GM12878 (cell line): ENCODE measurements at regions of chr3 and their contacts with region 1.

Region 1: DNA sequence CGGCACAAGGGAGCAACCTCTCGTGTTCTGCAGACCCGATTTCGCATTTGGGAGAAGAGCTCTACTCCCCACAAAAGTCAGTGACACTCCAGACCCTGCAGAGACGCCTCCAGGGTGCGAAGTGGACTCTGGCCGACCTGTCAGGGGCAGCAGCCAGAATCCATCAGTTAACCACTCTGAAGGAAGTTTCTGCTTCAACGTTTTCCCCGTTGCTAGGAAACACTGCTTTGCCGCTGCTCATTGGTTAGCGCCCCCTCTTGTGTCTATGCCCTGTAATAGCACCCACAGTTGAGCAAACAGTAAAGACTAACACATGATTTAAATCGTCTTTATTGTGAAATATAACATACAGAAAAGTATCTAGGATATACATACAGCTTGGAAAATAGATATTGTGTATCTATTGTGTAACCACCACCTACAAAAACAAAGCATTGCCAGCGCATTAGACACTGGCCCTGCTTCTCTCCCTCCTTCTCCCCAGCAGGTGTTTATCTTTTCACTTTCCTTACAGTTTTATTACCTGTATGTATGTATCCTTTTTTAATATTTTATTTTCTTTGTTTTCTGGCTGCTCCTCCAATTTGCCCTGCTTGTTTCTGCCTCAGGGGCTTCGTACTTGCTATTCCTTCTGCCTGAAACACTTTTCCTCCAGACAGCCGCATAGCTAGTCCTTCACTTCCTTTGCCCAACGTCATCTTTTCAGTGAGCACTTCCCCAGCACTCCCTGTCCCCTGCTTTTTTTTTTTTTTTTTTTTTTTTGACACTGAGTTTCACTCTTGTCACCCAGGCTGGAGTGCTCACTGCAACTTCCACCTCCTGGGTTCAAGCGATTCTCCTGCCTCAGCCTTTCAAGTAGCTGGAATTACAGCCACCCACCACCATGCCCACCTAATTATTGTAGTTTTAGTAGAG is 38.8 kb downstream of the TMEM40 start:
- DNase-seq: no peak
- ATAC-seq: peak; percentile 96
- H3K4me3 ChIP-seq: no peak overlapping the region
- H3K27ac ChIP-seq: no peak overlapping the region
- H3K4me1 ChIP-seq: no peaks in the 10 kb centered on the region
- H3K27me3 ChIP-seq: no peaks in the 10 kb centered on the region
- CTCF ChIP-seq: peak; percentile 90 to 96 (median 95); a peak in 5 of 6 replicates
- EP300 ChIP-seq: no peak; a peak in 1 of 4 replicates
- POLR2A ChIP-seq: no peak
- RAD21 ChIP-seq: peak; percentile 84

Region 2: GRCh38 chr3:12601072-12601471 is 119.2 kb before region 1 on chr3:
- CTCF ChIA-PET with region 1: interaction called, 17 read pairs
- POLR2A ChIA-PET with region 1: no interaction called
- RAD21 ChIA-PET with region 1: interaction called, 4 read pairs
- SMC1A ChIA-PET with region 1: interaction called, 9 read pairs
- in situ Hi-C with region 1: no loop called
- intact Hi-C with region 1: no loop called
- DNase-seq: no peak
- ATAC-seq: no peak
- H3K4me3 ChIP-seq: no peak overlapping the region
- H3K27ac ChIP-seq: no peak overlapping the region
- H3K4me1 ChIP-seq: no peaks in the 10 kb centered on the region
- H3K27me3 ChIP-seq: no peaks in the 10 kb centered on the region
- CTCF ChIP-seq: peak; percentile 6 to 28 (median 8); a peak in 3 of 6 replicates
- EP300 ChIP-seq: no peak
- POLR2A ChIP-seq: no peak
- RAD21 ChIP-seq: peak; percentile 25; the same call in 1 of the 2 replicates

Region 3: GRCh38 chr3:12706504-12707253 is 13.6 kb before region 1 on chr3:
- CTCF ChIA-PET with region 1: interaction called, 14 read pairs
- POLR2A ChIA-PET with region 1: interaction called, 5 read pairs
- RAD21 ChIA-PET with region 1: no interaction called
- SMC1A ChIA-PET with region 1: interaction called, 10 read pairs
- in situ Hi-C with region 1: no loop called
- intact Hi-C with region 1: no loop called
- DNase-seq: peak; percentile 45
- ATAC-seq: peak; percentile 100
- H3K4me3 ChIP-seq: no peak overlapping the region
- H3K27ac ChIP-seq: no peak overlapping the region
- H3K4me1 ChIP-seq: no peaks in the 10 kb centered on the region
- H3K27me3 ChIP-seq: no peaks in the 10 kb centered on the region; a peak in 1 of 4 replicates
- CTCF ChIP-seq: peak; percentile 85 to 94 (median 93)
- EP300 ChIP-seq: no peak
- POLR2A ChIP-seq: no peak
- RAD21 ChIP-seq: peak; percentile 73

Region 4: DNA sequence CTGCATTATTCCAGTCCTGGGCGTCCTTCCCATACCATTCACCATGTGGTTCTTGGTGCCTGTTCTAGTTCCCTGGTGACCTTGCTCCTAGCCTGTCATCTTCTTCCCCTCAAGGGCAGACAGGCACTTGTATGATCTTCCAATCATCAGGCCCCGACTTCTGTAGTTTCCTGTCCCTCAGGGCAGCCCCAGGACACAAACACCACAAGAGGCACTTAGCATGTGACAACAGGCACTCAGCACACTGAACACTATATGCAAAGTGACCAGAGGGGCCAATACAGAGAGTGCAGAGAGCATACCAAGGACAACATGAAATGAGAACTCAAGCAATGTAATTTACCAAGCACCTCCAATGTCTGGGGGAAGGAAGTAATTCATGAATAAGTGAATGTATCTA is 21.0 kb after region 1 on chr3:
- CTCF ChIA-PET with region 1: no interaction called
- POLR2A ChIA-PET with region 1: no interaction called
- RAD21 ChIA-PET with region 1: no interaction called
- SMC1A ChIA-PET with region 1: no interaction called
- in situ Hi-C with region 1: no loop called
- intact Hi-C with region 1: no loop called
- DNase-seq: no peak
- ATAC-seq: peak; percentile 80
- H3K4me3 ChIP-seq: no peak overlapping the region
- H3K27ac ChIP-seq: no peak overlapping the region
- H3K4me1 ChIP-seq: peaks cover 4% of the 10 kb centered on the region; the same call in 1 of the 2 replicates
- H3K27me3 ChIP-seq: no peaks in the 10 kb centered on the region
- CTCF ChIP-seq: no peak
- EP300 ChIP-seq: no peak
- POLR2A ChIP-seq: no peak
- RAD21 ChIP-seq: no peak